CD4-positive, alpha-beta memory T cell (primary cell): ENCODE measurements at regions of chr5 and their contacts with region 1.

Region 1: GRCh38 chr5:140690941-140691924 is at the starts of genes HARS1 and HARS2:
- DNase-seq: peak; percentile 77 to 89 (median 78)
- H3K4me3 ChIP-seq: peak within 1 kb of the TSS; percentile 91
- H3K4me3 Mint-ChIP-seq: peak within 1 kb of the TSS; percentile 97 to 100 (median 99)
- H3K27ac ChIP-seq: peak within 1 kb of the TSS; percentile 83
- H3K27ac Mint-ChIP-seq: peak within 1 kb of the TSS; percentile 97 to 100 (median 98)
- H3K4me1 ChIP-seq: peaks cover 34% of the 10 kb centered on the region
- H3K4me1 Mint-ChIP-seq: peaks cover 23 to 47% (median 37%) of the 10 kb centered on the region in 4 donors
- H3K27me3 ChIP-seq: no peaks in the 10 kb centered on the region
- H3K27me3 Mint-ChIP-seq: no peaks in the 10 kb centered on the region
- total RNA-seq, gene HARS1: 60.7 to 63.5 TPM
- total RNA-seq, gene HARS2: 61.6 to 67.5 TPM

Region 2: GRCh38 chr5:139968547-139969261 is 722.5 kb before region 1 on chr5:
- CTCF ChIA-PET with region 1: no interaction called
- POLR2A ChIA-PET with region 1: no interaction called
- intact Hi-C with region 1: no loop called
- DNase-seq: peak; percentile 77 to 82 (median 79)
- H3K4me3 ChIP-seq: no peak overlapping the region
- H3K4me3 Mint-ChIP-seq: no peak overlapping the region
- H3K27ac ChIP-seq: no peak overlapping the region
- H3K27ac Mint-ChIP-seq: peak overlapping the region in 1 of 7 donors; percentile 47
- H3K4me1 ChIP-seq: no peaks in the 10 kb centered on the region
- H3K4me1 Mint-ChIP-seq: no peaks in the 10 kb centered on the region
- H3K27me3 ChIP-seq: no peaks in the 10 kb centered on the region
- H3K27me3 Mint-ChIP-seq: peaks cover 5 to 11% of the 10 kb centered on the region in 2 donors

Region 3: DNA sequence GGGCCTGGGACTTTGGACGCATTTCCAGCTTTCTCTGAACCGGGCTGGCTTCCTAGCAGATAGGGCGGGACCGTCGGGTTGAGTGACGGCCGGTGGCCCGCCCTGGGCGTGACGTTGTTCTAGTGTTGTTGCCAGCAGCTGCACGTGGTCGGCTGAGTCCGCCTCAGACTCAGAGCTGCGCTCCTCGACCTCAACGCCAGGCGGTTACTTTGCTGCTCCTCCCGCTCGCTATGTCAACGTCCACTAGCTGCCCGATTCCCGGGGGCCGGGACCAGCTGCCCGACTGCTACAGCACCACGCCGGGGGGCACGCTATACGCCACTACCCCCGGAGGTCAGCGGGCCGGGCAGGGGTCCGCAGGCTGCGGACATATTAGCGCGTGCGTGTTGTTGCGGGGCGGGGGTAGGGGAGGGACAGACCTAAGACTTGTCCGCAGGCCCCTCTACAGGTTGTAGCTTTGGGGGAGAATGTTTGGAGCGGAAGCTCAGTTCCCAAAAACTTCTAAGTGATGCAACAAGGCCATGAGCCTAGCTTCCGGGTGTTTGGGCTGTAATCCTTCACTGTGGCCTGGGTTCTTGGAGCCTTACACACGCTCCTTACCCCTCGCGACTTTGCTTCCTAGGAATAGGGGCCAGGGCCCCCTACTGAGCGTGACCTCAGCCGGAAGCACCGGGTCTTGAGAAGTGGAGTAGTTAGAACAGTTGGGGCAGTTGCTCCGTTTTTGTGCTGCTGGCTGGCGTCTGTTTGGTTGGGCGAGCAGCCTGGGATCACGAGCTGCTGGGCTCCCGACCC is 143.5 kb before region 1 on chr5 and contains the start of gene EIF4EBP3:
- CTCF ChIA-PET with region 1: interaction called, 3 read pairs
- POLR2A ChIA-PET with region 1: interaction called, 16 read pairs
- intact Hi-C with region 1: no loop called
- DNase-seq: peak; percentile 84 to 92 (median 87)
- H3K4me3 ChIP-seq: peak within 1 kb of the TSS; percentile 57 to 76
- H3K4me3 Mint-ChIP-seq: peak within 1 kb of the TSS; percentile 85 to 93 (median 89)
- H3K27ac ChIP-seq: peak within 1 kb of the TSS; percentile 77
- H3K27ac Mint-ChIP-seq: peak within 1 kb of the TSS; percentile 91 to 97 (median 97)
- H3K4me1 ChIP-seq: peaks cover 30% of the 10 kb centered on the region
- H3K4me1 Mint-ChIP-seq: peaks cover 19 to 50% (median 26%) of the 10 kb centered on the region in 4 donors
- H3K27me3 ChIP-seq: no peaks in the 10 kb centered on the region
- H3K27me3 Mint-ChIP-seq: no peaks in the 10 kb centered on the region
- total RNA-seq, gene EIF4EBP3: 15.3 to 18.8 TPM

Region 4: GRCh38 chr5:140632150-140633020 is 58.8 kb before region 1 on chr5:
- CTCF ChIA-PET with region 1: no interaction called
- POLR2A ChIA-PET with region 1: interaction called, 11 read pairs
- intact Hi-C with region 1: no loop called
- DNase-seq: peak; percentile 50 to 66 (median 55)
- H3K4me3 ChIP-seq: peak overlapping the region; percentile 61 to 73
- H3K4me3 Mint-ChIP-seq: peak overlapping the region; percentile 90 to 96 (median 90)
- H3K27ac ChIP-seq: peak overlapping the region; percentile 41
- H3K27ac Mint-ChIP-seq: peak overlapping the region; percentile 68 to 93 (median 89)
- H3K4me1 ChIP-seq: peaks cover 13% of the 10 kb centered on the region
- H3K4me1 Mint-ChIP-seq: peaks cover 10 to 30% (median 20%) of the 10 kb centered on the region in 4 donors
- H3K27me3 ChIP-seq: no peaks in the 10 kb centered on the region
- H3K27me3 Mint-ChIP-seq: peaks cover 0 to 2% of the 10 kb centered on the region in 2 donors

Region 5: DNA sequence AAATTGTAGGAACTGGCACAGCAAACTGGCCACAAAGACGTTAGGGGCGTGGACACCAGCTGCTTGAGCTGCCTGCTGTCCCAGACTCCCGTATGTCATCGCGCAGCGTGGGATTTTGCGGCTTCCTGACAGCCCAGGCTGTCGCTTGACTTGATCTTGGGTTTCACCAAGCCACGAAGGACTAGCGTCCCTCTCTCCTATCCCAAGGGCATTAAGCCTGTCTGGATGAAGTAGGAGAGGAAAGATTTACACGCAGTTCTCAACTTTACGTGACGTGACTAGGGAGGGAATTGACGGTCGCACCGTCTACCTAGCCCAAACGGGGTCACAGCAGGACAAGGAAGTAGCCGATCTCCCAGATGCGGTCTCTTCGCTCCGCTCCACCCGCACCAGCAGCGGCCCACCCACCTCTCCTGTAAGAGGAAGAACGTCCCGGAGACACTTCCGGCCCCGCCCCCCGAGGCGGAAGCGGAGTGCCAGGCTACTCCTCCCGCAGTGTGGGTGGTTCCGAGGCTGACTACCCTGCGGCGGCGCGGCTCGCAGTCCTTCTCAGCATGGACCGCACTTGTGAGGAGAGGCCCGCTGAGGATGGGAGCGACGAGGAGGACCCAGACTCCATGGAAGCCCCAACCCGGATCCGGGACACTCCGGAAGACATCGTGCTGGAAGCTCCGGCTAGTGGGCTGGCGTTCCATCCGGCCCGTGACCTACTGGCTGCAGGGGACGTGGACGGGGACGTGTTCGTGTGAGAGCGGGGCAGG is 26.7 kb before region 1 on chr5 and contains the start of gene WDR55:
- CTCF ChIA-PET with region 1: no interaction called
- POLR2A ChIA-PET with region 1: interaction called, 35 read pairs
- intact Hi-C with region 1: loop called (anchors 1 kb)
- DNase-seq: peak; percentile 94 to 99 (median 94)
- H3K4me3 ChIP-seq: peak within 1 kb of the TSS; percentile 90 to 98
- H3K4me3 Mint-ChIP-seq: peak within 1 kb of the TSS; percentile 96 to 99 (median 98)
- H3K27ac ChIP-seq: peak within 1 kb of the TSS; percentile 95
- H3K27ac Mint-ChIP-seq: peak within 1 kb of the TSS; percentile 98 to 99 (median 99)
- H3K4me1 ChIP-seq: peaks cover 20% of the 10 kb centered on the region
- H3K4me1 Mint-ChIP-seq: peaks cover 27 to 52% (median 34%) of the 10 kb centered on the region in 4 donors
- H3K27me3 ChIP-seq: no peaks in the 10 kb centered on the region
- H3K27me3 Mint-ChIP-seq: no peaks in the 10 kb centered on the region
- total RNA-seq, gene WDR55: 47.1 to 49.6 TPM

Region 6: DNA sequence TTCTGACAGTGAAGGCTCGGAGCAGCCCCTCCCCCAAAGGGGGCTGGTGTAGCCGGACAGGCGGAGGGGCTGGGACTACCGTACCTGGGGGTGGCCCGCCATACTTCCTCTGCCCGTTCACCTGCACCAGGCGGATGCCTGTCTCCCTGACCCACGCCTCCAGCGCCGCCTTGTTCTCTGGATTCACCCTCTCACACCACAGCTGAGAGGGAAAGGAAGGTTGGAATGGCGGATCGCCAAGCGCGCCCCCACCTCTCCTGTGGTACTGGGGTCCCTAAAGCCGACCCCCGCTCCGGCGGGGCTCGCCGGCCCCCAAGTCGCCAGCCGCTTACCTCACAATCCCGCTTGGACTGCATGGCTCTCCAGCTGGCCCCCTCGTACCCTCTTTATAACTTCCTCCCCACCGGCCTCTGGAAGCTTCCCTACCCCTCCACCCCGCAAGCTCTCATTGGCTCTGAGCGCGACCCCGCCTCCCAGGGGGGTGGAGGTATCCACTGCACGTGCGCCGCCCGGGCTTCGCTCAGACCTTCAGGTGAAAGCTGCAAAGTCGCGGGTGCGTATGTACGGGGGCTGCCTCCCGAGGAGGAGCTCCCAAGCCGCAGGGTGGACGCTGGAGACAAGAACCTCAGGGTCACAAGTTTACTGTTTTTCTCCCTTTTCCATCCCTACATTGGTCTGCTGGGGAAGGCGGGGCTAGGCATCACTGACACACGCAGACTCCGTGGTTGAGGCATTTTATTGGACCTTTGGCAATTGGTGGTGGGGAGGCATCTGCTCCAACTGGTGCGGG is 17.9 kb before region 1 on chr5 and contains the start of gene DND1:
- CTCF ChIA-PET with region 1: no interaction called
- POLR2A ChIA-PET with region 1: interaction called, 11 read pairs
- intact Hi-C with region 1: no loop called
- DNase-seq: no peak
- H3K4me3 ChIP-seq: no peak within 1 kb of the TSS
- H3K4me3 Mint-ChIP-seq: no peak within 1 kb of the TSS
- H3K27ac ChIP-seq: no peak within 1 kb of the TSS
- H3K27ac Mint-ChIP-seq: no peak within 1 kb of the TSS
- H3K4me1 ChIP-seq: no peaks in the 10 kb centered on the region
- H3K4me1 Mint-ChIP-seq: peaks cover 0 to 12% (median 3%) of the 10 kb centered on the region in 4 donors
- H3K27me3 ChIP-seq: no peaks in the 10 kb centered on the region
- H3K27me3 Mint-ChIP-seq: no peaks in the 10 kb centered on the region
- total RNA-seq, gene DND1: 4.0 to 5.0 TPM